ENCODE measurements at regions of chrX and their contacts with region 1.

Region 1: GRCh38 chrX:53441531-53442321 is 7.6 kb upstream of the HSD17B10 start:
- H3K4me3 Mint-ChIP-seq: peak overlapping the region; percentile 81
- H3K27ac Mint-ChIP-seq: peak overlapping the region; percentile 87
- H3K4me1 Mint-ChIP-seq: peaks cover 44% of the 10 kb centered on the region
- H3K27me3 Mint-ChIP-seq: no peaks in the 10 kb centered on the region

Region 2: DNA sequence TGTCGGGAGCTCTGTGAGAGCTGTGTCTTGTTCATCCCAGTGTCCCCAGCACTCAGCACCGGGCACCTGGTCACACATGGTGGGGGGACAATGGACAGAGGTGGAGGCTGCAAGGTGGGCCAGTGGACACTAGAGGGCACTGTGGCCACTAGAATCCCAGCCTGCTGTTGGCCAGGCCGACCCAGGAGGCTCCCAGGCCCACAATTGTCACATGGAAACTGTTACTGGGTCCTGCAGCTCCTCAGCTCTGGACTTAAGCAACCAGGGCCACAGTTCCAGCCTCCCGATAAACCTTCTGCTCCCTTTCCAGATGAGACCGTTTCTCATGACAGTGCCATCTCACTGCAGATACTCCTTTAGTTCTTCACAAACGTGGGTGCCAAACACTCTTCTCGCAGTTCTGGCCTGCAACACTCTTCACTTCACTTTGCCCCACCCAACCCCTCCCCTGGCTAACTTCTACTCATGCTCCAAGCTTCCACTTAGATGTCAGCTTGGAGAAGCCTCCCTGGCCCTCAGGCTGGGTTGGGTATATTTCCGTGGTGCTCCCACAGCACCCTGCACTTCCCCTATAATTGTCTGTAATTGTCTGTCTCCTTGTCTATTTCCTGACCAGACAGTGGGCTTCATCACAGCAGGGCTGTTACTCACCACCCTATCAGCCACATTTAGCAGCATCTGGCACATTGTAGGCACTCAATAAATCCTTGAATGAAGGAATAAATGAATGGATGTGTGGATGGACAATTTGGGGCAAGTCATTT is 156.9 kb before region 1 on chrX:
- intact Hi-C with region 1: loop called (anchors 10 kb)
- H3K4me3 Mint-ChIP-seq: no peak overlapping the region
- H3K27ac Mint-ChIP-seq: peak overlapping the region; percentile 50
- H3K4me1 Mint-ChIP-seq: peaks cover 69% of the 10 kb centered on the region
- H3K27me3 Mint-ChIP-seq: no peaks in the 10 kb centered on the region

Region 3: GRCh38 chrX:53312946-53313727 is 128.6 kb before region 1 on chrX:
- intact Hi-C with region 1: loop called (anchors 5 kb)
- H3K4me3 Mint-ChIP-seq: peak overlapping the region; percentile 34
- H3K27ac Mint-ChIP-seq: peak overlapping the region; percentile 92
- H3K4me1 Mint-ChIP-seq: peaks cover 28% of the 10 kb centered on the region
- H3K27me3 Mint-ChIP-seq: no peaks in the 10 kb centered on the region

Measured in dendritic cell treated with granulocyte-macrophage colony-stimulating factor and Interleukin-4, amounts not matched to agents 40 ng/mL and 50 ng/mL, for 4 days (primary cell).